ENCODE measurements at regions of chr13 and their contacts with region 1.

Region 1: GRCh38 chr13:27130979-27131623 is 40.5 kb downstream of the USP12 start:
- DNase-seq: peak; percentile 53 to 84
- ATAC-seq: peak; percentile 88 to 97 (median 94)
- H3K4me3 ChIP-seq: no peak overlapping the region
- H3K4me3 Mint-ChIP-seq: peak overlapping the region; percentile 59
- H3K27ac ChIP-seq: peak overlapping the region; percentile 87
- H3K27ac Mint-ChIP-seq: peak overlapping the region; percentile 84 to 88
- H3K4me1 ChIP-seq: peaks cover 12% of the 10 kb centered on the region
- H3K4me1 Mint-ChIP-seq: peaks cover 55 to 57% of the 10 kb centered on the region in 2 donors
- H3K27me3 ChIP-seq: no peaks in the 10 kb centered on the region
- H3K27me3 Mint-ChIP-seq: no peaks in the 10 kb centered on the region
- CTCF ChIP-seq: no peak

Region 2: GRCh38 chr13:27171827-27172494 is 40.9 kb after region 1 on chr13:
- intact Hi-C with region 1: loop called (anchors 1 kb)
- DNase-seq: peak; percentile 93 to 96
- ATAC-seq: peak; percentile 86 to 97 (median 91)
- H3K4me3 ChIP-seq: peak overlapping the region; percentile 78
- H3K4me3 Mint-ChIP-seq: peak overlapping the region; percentile 94
- H3K27ac ChIP-seq: peak overlapping the region; percentile 96
- H3K27ac Mint-ChIP-seq: peak overlapping the region; percentile 92 to 97
- H3K4me1 ChIP-seq: peaks cover 19% of the 10 kb centered on the region
- H3K4me1 Mint-ChIP-seq: peaks cover 36 to 43% of the 10 kb centered on the region in 2 donors
- H3K27me3 ChIP-seq: no peaks in the 10 kb centered on the region
- H3K27me3 Mint-ChIP-seq: no peaks in the 10 kb centered on the region
- CTCF ChIP-seq: no peak

Measured in natural killer cell (primary cell).